ENCODE measurements at regions of chr11 and their contacts with region 1.

Region 1: DNA sequence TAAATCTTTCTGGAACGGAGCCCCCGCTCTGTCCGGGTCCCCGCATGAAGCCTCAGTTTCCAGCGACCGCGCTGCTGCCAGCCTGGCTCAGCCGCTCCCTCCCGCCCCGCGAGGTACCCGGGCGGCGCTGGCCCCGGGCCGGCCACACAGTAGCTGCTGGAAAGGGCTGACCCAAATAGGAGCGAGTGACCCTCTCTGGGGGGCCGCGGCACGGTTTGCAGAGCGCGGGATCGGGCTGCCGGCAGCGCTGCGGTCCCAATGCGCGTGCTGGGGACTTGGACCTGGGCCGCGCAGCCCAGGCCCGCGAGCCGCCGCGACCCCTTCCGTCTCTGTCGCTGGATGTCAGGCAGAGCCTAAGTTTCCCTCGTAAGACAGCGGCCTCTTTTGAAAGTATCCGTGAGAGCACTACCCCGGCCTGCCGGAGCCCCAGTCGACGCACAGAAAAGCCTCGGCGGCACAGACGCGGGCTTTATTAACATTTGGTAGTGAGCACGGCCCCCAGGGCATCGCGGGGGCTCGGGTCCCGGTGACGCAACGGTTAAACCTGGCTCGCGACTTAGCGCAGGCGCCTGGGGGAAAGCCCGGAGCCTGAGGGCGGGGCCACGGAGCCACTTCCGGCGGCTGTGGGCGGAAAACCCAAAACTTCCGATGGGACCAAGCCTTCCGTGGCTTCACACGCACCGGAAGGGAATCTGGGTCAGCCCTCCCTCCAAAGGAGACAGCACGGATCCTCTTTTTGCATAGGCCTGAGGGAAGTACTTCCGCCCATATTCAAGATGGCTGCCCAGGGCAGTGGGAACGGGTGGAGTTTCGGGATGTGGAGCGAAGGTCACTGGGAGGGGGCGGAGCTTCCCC is 14.9 kb downstream of the BAD start:
- DNase-seq: peak; percentile 99
- ATAC-seq: peak; percentile 85
- H3K4me3 ChIP-seq: peak overlapping the region; percentile 71 to 90 (median 89)
- H3K27ac ChIP-seq: peak overlapping the region; percentile 95
- H3K4me1 ChIP-seq: peaks cover 38% of the 10 kb centered on the region
- H3K27me3 ChIP-seq: no peaks in the 10 kb centered on the region
- CTCF ChIP-seq: peak; percentile 29; the same call in 1 of the 2 replicates
- EP300 ChIP-seq: no peak; a peak in 2 of 4 replicates
- POLR2A ChIP-seq: no peak
- RAD21 ChIP-seq: peak; percentile 21; the same call in 1 of the 2 replicates

Region 2: DNA sequence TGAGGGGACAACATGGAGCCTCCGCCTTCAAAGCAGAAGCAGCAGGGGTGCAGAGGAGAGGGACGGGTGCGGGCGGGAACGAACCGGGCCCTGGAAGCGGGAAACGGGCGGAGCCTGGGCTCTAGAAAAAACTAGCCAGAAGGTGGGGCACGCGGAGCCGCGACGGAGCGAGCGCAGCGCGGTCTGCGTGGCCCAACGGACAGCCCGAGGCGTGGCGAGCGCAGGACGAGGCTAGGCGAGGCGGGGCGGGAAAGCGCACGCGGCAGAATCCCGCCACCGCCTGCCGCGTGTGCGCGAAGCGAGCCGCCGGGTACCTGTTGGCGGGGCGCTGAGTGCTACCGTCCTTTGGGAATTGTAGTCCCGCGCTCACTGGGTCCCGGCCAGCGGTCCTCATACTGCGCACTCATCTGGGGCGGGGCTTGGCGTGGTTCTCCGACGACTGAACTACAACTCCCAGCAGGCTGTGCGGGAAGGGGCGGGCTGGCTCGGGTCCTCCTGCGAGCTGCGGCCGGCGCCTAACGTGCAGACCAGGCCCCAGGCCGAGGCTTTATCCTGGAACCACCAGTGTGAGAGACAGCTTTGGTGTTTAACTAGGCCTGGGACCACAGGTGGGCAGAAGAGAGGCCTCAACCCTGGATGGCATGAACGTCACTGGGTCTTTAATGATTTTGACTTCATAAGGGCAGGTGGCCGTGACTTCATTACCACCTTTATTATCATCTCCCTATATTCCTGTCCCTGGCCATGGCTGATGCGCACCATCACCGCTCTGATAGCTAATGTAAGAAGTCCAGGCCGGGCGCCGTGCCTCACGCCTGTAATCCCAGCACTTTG is 598.1 kb before region 1 on chr11 and contains the start of gene ATL3:
- CTCF ChIA-PET with region 1: no interaction called
- POLR2A ChIA-PET with region 1: no interaction called
- in situ Hi-C with region 1: no loop called
- intact Hi-C with region 1: no loop called
- DNase-seq: no peak
- ATAC-seq: no peak; the same call in 2 of the 3 replicates
- H3K4me3 ChIP-seq: no peak within 1 kb of the TSS
- H3K27ac ChIP-seq: no peak within 1 kb of the TSS
- H3K4me1 ChIP-seq: peaks cover 20% of the 10 kb centered on the region
- H3K27me3 ChIP-seq: no peaks in the 10 kb centered on the region
- CTCF ChIP-seq: no peak
- EP300 ChIP-seq: no peak
- POLR2A ChIP-seq: no peak
- RAD21 ChIP-seq: no peak
- total RNA-seq, gene ATL3: not detected in 2 replicates

Region 3: DNA sequence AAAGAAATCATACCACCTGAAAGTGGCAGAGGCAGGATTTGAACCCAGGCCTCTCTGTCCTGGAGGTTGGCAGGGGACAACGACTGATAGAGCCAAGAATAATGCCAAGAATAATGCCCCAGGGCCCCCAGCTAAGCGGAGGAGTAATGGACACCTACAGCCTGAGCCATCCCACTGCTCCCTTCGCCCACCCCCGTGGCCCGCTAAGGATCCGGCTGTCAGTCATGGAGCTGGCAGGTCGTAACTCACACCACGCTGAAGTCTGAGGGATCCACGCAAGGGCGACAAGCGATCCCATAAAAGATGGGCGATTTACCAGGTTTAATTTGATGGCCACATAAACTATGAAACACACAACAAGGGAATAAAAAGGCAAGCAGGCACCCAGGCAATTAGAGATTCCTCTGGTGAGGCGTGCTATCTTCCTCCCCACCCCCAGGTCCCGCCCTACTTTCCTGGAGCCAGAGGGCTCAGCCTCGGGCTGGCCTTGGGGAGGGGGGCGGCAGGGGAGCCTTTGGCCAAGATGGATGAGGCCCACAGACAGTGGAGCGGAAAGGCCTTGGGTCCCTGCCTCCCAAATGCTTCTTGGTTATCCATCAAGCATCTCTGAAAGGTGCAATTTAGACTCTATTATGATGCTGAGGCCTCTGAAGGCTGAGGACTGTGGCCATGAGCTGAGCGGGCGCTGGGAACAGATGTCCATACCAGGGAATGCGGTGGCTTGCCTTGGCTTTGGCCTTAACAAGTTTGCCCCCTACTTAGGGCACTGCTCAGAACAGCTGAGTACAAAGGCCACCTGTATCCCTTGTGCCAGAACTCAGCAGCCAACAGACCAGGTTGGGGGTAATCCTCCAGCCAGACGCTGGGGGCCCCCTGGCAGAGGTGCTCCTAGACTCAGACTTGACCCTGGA is 158.9 kb before region 1 on chr11:
- CTCF ChIA-PET with region 1: no interaction called
- POLR2A ChIA-PET with region 1: no interaction called
- in situ Hi-C with region 1: no loop called
- intact Hi-C with region 1: no loop called
- DNase-seq: no peak
- ATAC-seq: peak; percentile 26; the same call in 2 of the 3 replicates
- H3K4me3 ChIP-seq: no peak overlapping the region
- H3K27ac ChIP-seq: no peak overlapping the region
- H3K4me1 ChIP-seq: peaks cover 17% of the 10 kb centered on the region
- H3K27me3 ChIP-seq: no peaks in the 10 kb centered on the region
- CTCF ChIP-seq: no peak
- EP300 ChIP-seq: no peak
- POLR2A ChIP-seq: no peak
- RAD21 ChIP-seq: no peak

Region 4: GRCh38 chr11:64185816-64186498 is 83.7 kb before region 1 on chr11 and contains the start of gene STIP1:
- CTCF ChIA-PET with region 1: no interaction called
- POLR2A ChIA-PET with region 1: interaction called, 27 read pairs
- in situ Hi-C with region 1: no loop called
- intact Hi-C with region 1: no loop called
- DNase-seq: peak; percentile 100
- ATAC-seq: peak; percentile 92
- H3K4me3 ChIP-seq: peak within 1 kb of the TSS; percentile 60 to 75 (median 60)
- H3K27ac ChIP-seq: peak within 1 kb of the TSS; percentile 83
- H3K4me1 ChIP-seq: peaks cover 51% of the 10 kb centered on the region
- H3K27me3 ChIP-seq: no peaks in the 10 kb centered on the region
- CTCF ChIP-seq: peak; percentile 60
- EP300 ChIP-seq: peak in 1 of 2 experiments; percentile 62; a peak in 2 of 4 replicates
- POLR2A ChIP-seq: peak in 1 of 2 experiments; percentile 82; a peak in 2 of 4 replicates
- RAD21 ChIP-seq: no peak; the same call in 1 of the 2 replicates
- total RNA-seq, gene STIP1: 217 and 245 TPM in 2 replicates

Region 5: DNA sequence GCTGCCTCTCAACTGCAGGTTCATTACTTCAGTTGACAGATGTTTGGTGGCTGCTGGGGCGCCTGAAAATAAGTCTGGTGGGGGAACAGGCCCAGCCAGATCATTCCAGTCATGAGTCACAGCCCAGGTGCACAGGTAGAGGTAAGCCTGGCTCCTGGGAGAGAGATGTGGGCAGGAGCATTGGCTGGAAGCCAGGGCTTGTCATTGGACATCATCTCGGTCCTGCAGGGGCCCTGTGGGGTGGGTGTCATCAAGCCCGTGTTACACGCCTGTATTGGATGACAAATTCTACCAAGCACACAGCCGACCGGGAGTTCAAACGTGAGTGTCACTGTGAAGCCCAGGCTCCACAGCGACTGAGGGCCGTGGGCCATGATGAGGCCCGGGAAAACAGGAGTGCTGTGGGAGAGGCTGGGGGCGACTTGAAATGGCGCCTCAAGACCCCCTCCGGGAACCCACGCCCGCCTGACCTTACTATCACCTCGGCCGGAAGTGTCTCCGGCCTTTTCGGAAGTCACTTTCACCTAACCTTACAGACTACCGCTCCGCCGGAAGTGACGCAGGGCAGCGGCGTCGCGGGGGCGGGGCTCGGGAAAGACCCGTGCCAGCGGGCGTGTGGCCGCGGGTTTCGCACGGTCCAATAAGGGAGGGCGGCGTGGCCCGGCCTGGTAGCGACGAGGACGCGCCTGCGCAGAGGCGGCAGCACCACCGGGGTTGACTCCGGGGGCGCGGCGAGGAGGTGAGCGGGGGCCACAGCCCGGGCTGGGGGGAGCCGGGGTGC is 29.0 kb before region 1 on chr11 and contains the start of gene FKBP2:
- CTCF ChIA-PET with region 1: no interaction called
- POLR2A ChIA-PET with region 1: interaction called, 113 read pairs
- in situ Hi-C with region 1: no loop called
- intact Hi-C with region 1: no loop called
- DNase-seq: peak; percentile 93
- ATAC-seq: peak; percentile 46
- H3K4me3 ChIP-seq: peak within 1 kb of the TSS; percentile 84 to 93 (median 88)
- H3K27ac ChIP-seq: peak within 1 kb of the TSS; percentile 91
- H3K4me1 ChIP-seq: peaks cover 67% of the 10 kb centered on the region
- H3K27me3 ChIP-seq: no peaks in the 10 kb centered on the region; a peak in 1 of 5 replicates
- CTCF ChIP-seq: no peak
- EP300 ChIP-seq: no peak
- POLR2A ChIP-seq: peak in 1 of 2 experiments; percentile 88; a peak in 2 of 4 replicates
- RAD21 ChIP-seq: no peak
- total RNA-seq, gene FKBP2: 29.4 and 53.3 TPM in 2 replicates

Region 6: GRCh38 chr11:64259533-64260067 is 10.0 kb before region 1 on chr11:
- CTCF ChIA-PET with region 1: no interaction called
- POLR2A ChIA-PET with region 1: interaction called, 10 read pairs
- in situ Hi-C with region 1: no loop called
- intact Hi-C with region 1: no loop called
- DNase-seq: no peak
- ATAC-seq: no peak
- H3K4me3 ChIP-seq: no peak overlapping the region
- H3K27ac ChIP-seq: no peak overlapping the region
- H3K4me1 ChIP-seq: no peaks in the 10 kb centered on the region
- H3K27me3 ChIP-seq: no peaks in the 10 kb centered on the region
- CTCF ChIP-seq: no peak
- EP300 ChIP-seq: no peak
- POLR2A ChIP-seq: no peak
- RAD21 ChIP-seq: no peak

Region 7: GRCh38 chr11:64290352-64291261 is 21.0 kb after region 1 on chr11:
- CTCF ChIA-PET with region 1: no interaction called
- POLR2A ChIA-PET with region 1: interaction called, 48 read pairs
- in situ Hi-C with region 1: no loop called
- intact Hi-C with region 1: loop called (anchors 2 kb)
- DNase-seq: no peak
- ATAC-seq: no peak
- H3K4me3 ChIP-seq: no peak overlapping the region
- H3K27ac ChIP-seq: no peak overlapping the region
- H3K4me1 ChIP-seq: peaks cover 23% of the 10 kb centered on the region; the same call in 1 of the 2 replicates
- H3K27me3 ChIP-seq: peaks cover 18 to 50% of the 10 kb centered on the region in 2 experiments
- CTCF ChIP-seq: no peak
- EP300 ChIP-seq: no peak
- POLR2A ChIP-seq: no peak
- RAD21 ChIP-seq: no peak

Region 8: DNA sequence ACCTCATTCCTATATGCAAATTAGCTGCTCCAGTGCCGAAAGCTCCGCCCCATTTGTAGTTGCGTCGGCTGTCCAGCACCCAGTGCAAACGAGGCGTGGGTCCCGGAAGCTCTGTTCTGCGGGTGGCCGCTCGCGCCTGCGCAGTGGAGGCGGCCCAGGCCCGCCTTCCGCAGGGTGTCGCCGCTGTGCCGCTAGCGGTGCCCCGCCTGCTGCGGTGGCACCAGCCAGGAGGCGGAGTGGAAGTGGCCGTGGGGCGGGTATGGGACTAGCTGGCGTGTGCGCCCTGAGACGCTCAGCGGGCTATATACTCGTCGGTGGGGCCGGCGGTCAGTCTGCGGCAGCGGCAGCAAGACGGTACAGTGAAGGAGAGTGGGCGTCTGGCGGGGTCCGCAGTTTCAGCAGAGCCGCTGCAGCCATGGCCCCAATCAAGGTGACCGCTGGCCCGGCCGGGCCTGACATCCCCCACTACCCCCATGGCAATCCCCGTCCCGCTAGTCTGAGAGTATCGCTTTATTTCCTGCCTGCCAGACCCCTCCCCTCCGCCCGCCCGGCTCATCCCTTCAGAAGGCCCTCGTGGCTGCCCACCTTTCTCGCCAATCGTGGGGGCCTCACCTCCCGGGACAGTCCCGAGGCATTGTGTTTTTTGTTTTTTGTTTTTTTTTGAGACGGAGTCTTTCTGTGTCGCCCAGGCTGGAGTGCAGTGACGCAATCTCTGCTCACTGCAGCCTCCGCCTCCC is 48.5 kb after region 1 on chr11 and contains the start of gene PRDX5:
- CTCF ChIA-PET with region 1: no interaction called
- POLR2A ChIA-PET with region 1: interaction called, 63 read pairs
- in situ Hi-C with region 1: no loop called
- intact Hi-C with region 1: no loop called
- DNase-seq: peak; percentile 94
- ATAC-seq: peak; percentile 81
- H3K4me3 ChIP-seq: peak within 1 kb of the TSS; percentile 97 to 99 (median 99)
- H3K27ac ChIP-seq: peak within 1 kb of the TSS; percentile 98
- H3K4me1 ChIP-seq: peaks cover 22% of the 10 kb centered on the region
- H3K27me3 ChIP-seq: no peaks in the 10 kb centered on the region; a peak in 1 of 5 replicates
- CTCF ChIP-seq: peak; percentile 85
- EP300 ChIP-seq: 0 out of 4 replicates have a peak, but pooled peaks of 1 of the 2 experiments have one; percentile 5
- POLR2A ChIP-seq: peak in 1 of 2 experiments; percentile 83
- RAD21 ChIP-seq: peak; percentile 80
- total RNA-seq, gene PRDX5: 215 and 266 TPM in 2 replicates

Region 9: GRCh38 chr11:64358907-64359711 is 89.5 kb after region 1 on chr11 and contains the start of gene RPS6KA4:
- CTCF ChIA-PET with region 1: no interaction called
- POLR2A ChIA-PET with region 1: interaction called, 12 read pairs
- in situ Hi-C with region 1: no loop called
- intact Hi-C with region 1: no loop called
- DNase-seq: no peak
- ATAC-seq: peak; percentile 78
- H3K4me3 ChIP-seq: peak within 1 kb of the TSS; percentile 80 to 96 (median 94)
- H3K27ac ChIP-seq: peak within 1 kb of the TSS; percentile 59
- H3K4me1 ChIP-seq: peaks cover 48% of the 10 kb centered on the region
- H3K27me3 ChIP-seq: no peaks in the 10 kb centered on the region; a peak in 1 of 5 replicates
- CTCF ChIP-seq: no peak
- EP300 ChIP-seq: no peak
- POLR2A ChIP-seq: no peak; a peak in 1 of 4 replicates
- RAD21 ChIP-seq: peak; percentile 14; the same call in 1 of the 2 replicates
- total RNA-seq, gene RPS6KA4: 8.9 and 14.2 TPM in 2 replicates

Region 10: DNA sequence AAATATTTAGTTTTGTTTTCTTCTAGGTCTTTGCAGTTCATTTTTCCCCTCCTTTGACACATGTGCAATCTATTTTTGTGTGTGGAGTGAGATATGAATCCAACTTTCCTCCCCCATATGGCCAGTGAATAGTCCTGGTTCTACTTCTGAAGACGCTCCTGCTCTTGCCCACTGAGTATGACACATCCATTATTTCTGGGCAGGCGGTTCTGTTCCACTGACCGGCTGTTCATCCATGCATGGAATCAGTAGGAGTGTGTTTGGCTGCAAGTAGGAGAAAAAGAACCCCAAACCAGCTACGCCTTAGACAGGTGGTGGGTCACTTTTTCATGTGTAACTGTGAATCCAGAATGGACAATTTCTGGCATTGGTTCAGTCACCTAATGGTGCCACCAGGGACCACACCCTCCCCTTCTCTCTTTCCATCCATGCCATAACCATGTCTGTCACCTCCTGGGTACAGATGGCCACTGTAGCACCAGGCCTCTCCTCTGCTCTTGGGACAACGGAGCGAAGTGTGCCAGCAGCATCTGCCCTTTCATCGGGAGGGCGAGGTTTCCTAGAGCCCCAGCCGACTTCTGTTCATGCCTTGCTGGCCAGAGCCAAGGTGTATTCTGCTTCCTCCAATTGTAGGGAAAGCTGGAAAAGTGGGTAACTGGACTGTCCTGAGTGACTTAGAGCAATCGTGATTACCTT is 254.0 kb after region 1 on chr11:
- CTCF ChIA-PET with region 1: no interaction called
- POLR2A ChIA-PET with region 1: no interaction called
- in situ Hi-C with region 1: no loop called
- intact Hi-C with region 1: no loop called
- DNase-seq: no peak
- ATAC-seq: no peak
- H3K4me3 ChIP-seq: no peak overlapping the region
- H3K27ac ChIP-seq: no peak overlapping the region
- H3K4me1 ChIP-seq: no peaks in the 10 kb centered on the region
- H3K27me3 ChIP-seq: peaks cover 5 to 74% of the 10 kb centered on the region in 2 experiments; a peak in 4 of 5 replicates
- CTCF ChIP-seq: no peak
- EP300 ChIP-seq: no peak
- POLR2A ChIP-seq: no peak
- RAD21 ChIP-seq: no peak

Measured in HepG2 (cell line).